ENCODE measurements at regions of chr15 and their contacts with region 1.

Region 1: DNA sequence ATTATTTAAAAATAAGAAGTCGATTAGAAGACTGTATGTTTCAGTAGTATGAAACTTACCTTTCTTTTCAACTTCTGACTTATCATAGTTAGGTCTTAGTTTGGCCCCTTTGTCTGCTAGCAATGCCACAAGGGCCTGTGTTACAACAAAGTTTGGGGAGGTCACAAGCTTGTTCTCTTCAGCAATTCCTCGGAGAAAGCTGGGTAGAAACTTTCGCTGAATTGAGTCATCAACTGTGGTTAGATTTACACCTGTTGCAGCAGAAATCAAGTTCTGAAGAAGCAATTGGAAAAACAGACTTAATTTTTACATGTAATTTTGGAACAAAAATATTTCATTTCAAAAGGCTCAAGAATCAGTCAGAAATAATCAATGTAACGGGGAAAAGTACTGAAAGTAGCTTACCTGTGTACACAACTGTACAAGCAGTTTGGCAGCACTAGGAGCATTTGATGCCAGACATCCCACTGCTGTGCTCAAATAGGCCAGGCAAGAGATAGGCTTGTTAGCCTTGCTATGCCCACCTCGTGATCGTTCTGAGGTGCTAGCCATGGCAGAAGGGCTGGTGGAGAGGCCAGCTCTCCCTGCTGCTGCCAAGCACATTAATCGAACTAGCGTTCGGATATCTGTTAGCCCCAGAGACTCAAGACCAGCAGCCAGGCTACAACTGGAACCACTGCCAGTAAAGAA is 58.6 kb downstream of the FBXL22 start:
- DNase-seq: no peak
- ATAC-seq: no peak

Region 2: GRCh38 chr15:62403164-62403809 is 1252.5 kb before region 1 on chr15:
- intact Hi-C with region 1: no loop called
- DNase-seq: no peak
- ATAC-seq: peak; percentile 72 to 81

Region 3: GRCh38 chr15:63107895-63108546 is 547.8 kb before region 1 on chr15:
- intact Hi-C with region 1: no loop called
- DNase-seq: peak; percentile 41
- ATAC-seq: peak; percentile 72 to 84

Region 4: DNA sequence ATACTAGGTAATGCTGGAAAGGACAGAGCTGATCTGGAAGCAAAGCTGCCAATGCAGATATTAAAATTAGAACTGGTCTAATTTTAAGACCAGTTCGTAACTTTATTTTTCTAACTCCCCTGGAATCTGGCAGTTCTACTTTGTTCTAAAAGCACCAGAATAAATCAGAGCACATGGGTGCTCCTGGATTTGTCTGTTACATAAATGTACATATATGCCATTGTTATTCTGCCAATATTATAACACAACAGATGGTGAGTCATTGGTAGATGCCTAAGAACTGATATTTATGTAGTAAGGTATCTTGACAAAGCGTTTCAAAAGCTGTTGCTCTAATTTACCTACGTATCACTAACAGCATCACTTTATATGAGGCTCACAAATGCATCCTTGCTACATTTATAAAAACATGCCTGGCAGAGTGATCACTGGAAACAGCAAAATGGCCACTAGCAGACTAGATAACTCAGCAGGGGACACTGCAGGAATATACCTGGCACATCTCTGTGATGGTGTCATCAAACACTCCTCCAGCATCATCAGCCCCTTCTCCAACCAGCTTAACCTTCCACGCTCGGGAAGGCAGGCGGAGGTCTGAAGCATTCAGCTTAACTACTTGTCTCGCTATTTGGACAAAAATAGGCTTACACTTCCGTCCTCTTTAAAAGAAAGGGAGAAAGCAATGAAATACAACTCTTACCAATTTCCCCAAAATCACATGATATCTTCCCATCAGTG is 32.4 kb before region 1 on chr15:
- intact Hi-C with region 1: loop called in 1 of 2 experiments (anchors 5 kb)
- DNase-seq: no peak
- ATAC-seq: no peak

Region 5: DNA sequence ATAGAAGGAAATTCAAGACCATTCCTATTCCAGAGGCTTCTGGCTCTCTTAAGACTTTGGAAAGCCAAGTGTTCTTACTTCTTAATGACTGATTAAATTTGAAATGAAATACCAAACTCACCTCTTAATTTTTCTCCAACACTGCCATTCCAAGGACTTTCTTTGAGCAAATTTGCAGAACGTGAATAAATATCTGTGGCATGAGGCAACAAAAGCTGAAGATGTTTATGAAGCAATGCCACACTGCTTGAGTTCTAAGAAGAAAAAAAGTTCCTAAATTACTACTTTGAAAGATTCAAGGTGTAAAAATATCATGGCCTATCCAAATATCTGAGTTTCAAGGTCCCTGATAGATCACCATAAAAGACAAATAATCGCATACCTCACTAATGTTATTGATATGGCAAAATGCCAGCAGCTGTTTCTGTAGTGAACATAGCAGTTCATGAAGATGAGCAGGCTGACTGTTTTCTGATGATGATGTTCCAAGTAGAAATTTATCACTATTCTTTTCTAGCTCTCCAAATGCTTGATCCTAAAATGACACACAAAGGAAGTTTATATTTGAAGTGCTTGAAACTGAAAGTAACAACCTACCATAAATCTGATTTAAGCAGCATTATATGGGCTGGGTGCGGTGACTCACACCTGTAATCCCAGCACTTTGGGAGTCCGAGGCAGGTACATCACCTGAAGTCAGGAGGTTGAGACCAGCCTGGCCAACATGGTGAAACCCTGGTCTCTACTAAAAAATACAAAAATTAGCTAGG is 73.5 kb after region 1 on chr15:
- intact Hi-C with region 1: loop called in 1 of 2 experiments (anchors 10 kb)
- DNase-seq: no peak
- ATAC-seq: no peak